ENCODE measurements at regions of chr15 and their contacts with region 1.

Region 1: DNA sequence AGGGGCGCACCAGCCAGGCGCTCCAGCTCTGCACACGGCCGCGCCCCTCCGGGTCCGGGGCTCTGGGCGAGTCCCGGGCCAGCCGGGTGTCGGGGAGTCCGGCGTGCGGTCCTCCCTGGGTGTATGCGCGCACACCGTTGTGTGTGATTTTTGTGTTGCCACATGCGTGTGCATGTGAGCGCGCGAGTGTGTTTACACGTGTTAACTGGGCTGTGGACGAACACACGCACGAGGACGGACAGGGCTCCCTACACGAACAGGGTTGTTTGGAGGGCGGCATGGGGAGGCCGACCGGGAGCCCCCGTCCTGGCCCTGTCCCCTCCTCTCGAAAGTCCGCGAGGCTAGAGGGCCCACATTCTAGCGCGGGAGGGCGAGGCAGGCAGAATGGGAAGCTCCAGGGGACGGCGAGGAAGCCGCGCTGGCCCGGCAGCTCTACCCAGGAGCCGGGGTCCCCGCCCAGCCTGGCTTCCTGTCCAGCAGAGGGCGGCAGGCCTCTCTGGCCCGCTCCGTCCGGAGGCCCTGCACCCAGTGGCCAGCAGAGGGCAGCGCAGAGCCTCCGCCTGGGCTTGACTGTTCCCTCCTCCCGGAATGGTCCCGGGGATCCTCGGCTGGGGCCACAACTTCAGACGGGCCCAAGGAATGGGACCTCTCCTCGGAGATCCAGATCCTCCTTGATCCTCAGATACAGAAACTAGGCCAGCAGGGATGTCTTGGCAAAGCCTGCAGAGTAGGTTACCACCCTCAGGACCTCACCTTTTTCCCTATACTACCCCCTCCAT is 611 bp upstream of the LINGO1 start:
- DNase-seq: peak; percentile 68
- H3K4me3 Mint-ChIP-seq: no peak overlapping the region
- H3K27ac Mint-ChIP-seq: no peak overlapping the region
- H3K4me1 Mint-ChIP-seq: peaks cover 12% of the 10 kb centered on the region
- H3K27me3 Mint-ChIP-seq: peaks cover 87% of the 10 kb centered on the region

Region 2: GRCh38 chr15:77646104-77646694 is 12.9 kb after region 1 on chr15:
- CTCF ChIA-PET with region 1: interaction called, 23 read pairs
- DNase-seq: no peak
- H3K4me3 Mint-ChIP-seq: no peak overlapping the region
- H3K27ac Mint-ChIP-seq: no peak overlapping the region
- H3K4me1 Mint-ChIP-seq: no peaks in the 10 kb centered on the region
- H3K27me3 Mint-ChIP-seq: peaks cover 23% of the 10 kb centered on the region

Region 3: GRCh38 chr15:77821188-77821958 is 188.1 kb after region 1 on chr15:
- CTCF ChIA-PET with region 1: interaction called, 12 read pairs
- DNase-seq: peak; percentile 57
- H3K4me3 Mint-ChIP-seq: no peak overlapping the region
- H3K27ac Mint-ChIP-seq: no peak overlapping the region
- H3K4me1 Mint-ChIP-seq: peaks cover 4% of the 10 kb centered on the region
- H3K27me3 Mint-ChIP-seq: peaks cover 75% of the 10 kb centered on the region

Measured in activated naive CD4-positive, alpha-beta T cell treated with anti-CD3 and anti-CD28 coated beads, Interleukin-2, amount 10 ng/mL, durations not matched to agents 7 days and 5 days (primary cell).